A673 (cell line): ENCODE measurements at regions of chr17 and their contacts with region 1.

Region 1: DNA sequence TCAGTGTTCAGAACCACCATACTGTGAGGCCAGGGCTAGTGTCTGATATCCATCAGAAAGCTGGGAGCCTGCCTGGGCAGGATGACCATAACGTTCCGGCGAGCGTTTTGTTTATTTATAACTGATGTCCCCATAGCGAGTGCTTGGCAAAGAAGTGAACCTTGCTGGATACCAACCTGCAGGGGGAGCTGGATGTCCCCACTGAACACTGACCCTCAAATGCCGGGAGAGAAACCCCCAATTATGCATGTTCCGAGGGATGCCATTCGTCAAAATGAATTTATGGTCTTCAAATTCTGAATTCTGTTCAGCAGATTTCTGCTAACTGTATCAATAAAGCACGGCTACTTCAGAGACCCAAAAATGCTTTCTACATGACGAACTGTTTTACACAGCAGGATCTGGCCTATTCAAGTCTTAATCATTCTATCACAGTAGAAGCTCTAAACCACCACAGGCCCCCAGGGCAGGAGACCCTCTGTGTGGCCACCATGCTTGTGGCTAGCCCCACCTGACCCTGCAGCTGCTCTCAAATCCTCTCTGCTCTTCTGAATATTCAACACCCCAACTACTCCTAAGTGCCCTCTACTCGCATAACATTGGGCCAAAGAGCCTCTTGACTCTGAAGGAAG is 15.2 kb downstream of the MED24 start:
- DNase-seq: peak; percentile 30
- H3K4me3 ChIP-seq: no peak overlapping the region
- H3K27ac ChIP-seq: no peak overlapping the region
- H3K4me1 ChIP-seq: no peaks in the 10 kb centered on the region
- H3K27me3 ChIP-seq: no peaks in the 10 kb centered on the region
- CTCF ChIP-seq: peak; percentile 51

Region 2: GRCh38 chr17:39903158-39903884 is 135.7 kb before region 1 on chr17:
- CTCF ChIA-PET with region 1: interaction called, 13 read pairs
- POLR2A ChIA-PET with region 1: no interaction called
- intact Hi-C with region 1: no loop called
- DNase-seq: no peak
- H3K4me3 ChIP-seq: no peak overlapping the region
- H3K27ac ChIP-seq: no peak overlapping the region
- H3K4me1 ChIP-seq: no peaks in the 10 kb centered on the region
- H3K27me3 ChIP-seq: no peaks in the 10 kb centered on the region
- CTCF ChIP-seq: no peak

Region 3: GRCh38 chr17:40068917-40069750 is 30.1 kb after region 1 on chr17:
- CTCF ChIA-PET with region 1: interaction called, 11 read pairs
- POLR2A ChIA-PET with region 1: no interaction called
- intact Hi-C with region 1: no loop called
- DNase-seq: peak; percentile 77
- H3K4me3 ChIP-seq: peak overlapping the region; percentile 21
- H3K27ac ChIP-seq: peak overlapping the region; percentile 72
- H3K4me1 ChIP-seq: peaks cover 50% of the 10 kb centered on the region
- H3K27me3 ChIP-seq: no peaks in the 10 kb centered on the region
- CTCF ChIP-seq: no peak

Region 4: GRCh38 chr17:40086150-40087044 is 47.4 kb after region 1 on chr17:
- CTCF ChIA-PET with region 1: interaction called, 9 read pairs
- POLR2A ChIA-PET with region 1: no interaction called
- intact Hi-C with region 1: loop called (anchors 10 kb)
- DNase-seq: peak; percentile 43
- H3K4me3 ChIP-seq: no peak overlapping the region
- H3K27ac ChIP-seq: no peak overlapping the region
- H3K4me1 ChIP-seq: no peaks in the 10 kb centered on the region
- H3K27me3 ChIP-seq: no peaks in the 10 kb centered on the region
- CTCF ChIP-seq: peak; percentile 57